ENCODE measurements at regions of chr11 and their contacts with region 1.

Region 1: GRCh38 chr11:70270104-70270876 is at the start of gene PPFIA1:
- H3K4me3 Mint-ChIP-seq: peak within 1 kb of the TSS; percentile 91
- H3K27ac Mint-ChIP-seq: peak within 1 kb of the TSS; percentile 82
- H3K4me1 Mint-ChIP-seq: peaks cover 36% of the 10 kb centered on the region
- H3K27me3 Mint-ChIP-seq: peaks cover 36% of the 10 kb centered on the region

Region 2: DNA sequence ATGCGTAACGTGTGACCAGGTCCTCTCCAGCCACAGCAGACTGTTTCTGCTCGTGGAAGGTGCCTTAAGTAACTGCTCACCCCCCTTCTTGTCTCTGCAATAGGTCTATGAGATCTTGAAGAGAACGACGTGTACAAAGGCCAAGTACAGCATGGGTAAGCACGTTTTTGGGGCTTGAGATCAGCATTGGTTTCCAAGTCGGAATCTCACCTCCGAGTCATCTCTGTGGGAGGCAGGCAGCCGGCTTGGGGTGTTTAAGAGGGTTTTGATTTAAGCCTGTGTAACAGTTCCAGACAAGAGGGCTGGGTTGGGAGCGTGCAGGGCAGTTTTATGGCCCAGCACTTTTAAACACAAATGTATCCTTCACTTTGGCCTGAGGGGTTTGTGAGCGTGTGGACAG is 162.0 kb before region 1 on chr11:
- intact Hi-C with region 1: no loop called
- H3K4me3 Mint-ChIP-seq: no peak overlapping the region
- H3K27ac Mint-ChIP-seq: no peak overlapping the region
- H3K4me1 Mint-ChIP-seq: no peaks in the 10 kb centered on the region
- H3K27me3 Mint-ChIP-seq: peaks cover 14% of the 10 kb centered on the region

Region 3: DNA sequence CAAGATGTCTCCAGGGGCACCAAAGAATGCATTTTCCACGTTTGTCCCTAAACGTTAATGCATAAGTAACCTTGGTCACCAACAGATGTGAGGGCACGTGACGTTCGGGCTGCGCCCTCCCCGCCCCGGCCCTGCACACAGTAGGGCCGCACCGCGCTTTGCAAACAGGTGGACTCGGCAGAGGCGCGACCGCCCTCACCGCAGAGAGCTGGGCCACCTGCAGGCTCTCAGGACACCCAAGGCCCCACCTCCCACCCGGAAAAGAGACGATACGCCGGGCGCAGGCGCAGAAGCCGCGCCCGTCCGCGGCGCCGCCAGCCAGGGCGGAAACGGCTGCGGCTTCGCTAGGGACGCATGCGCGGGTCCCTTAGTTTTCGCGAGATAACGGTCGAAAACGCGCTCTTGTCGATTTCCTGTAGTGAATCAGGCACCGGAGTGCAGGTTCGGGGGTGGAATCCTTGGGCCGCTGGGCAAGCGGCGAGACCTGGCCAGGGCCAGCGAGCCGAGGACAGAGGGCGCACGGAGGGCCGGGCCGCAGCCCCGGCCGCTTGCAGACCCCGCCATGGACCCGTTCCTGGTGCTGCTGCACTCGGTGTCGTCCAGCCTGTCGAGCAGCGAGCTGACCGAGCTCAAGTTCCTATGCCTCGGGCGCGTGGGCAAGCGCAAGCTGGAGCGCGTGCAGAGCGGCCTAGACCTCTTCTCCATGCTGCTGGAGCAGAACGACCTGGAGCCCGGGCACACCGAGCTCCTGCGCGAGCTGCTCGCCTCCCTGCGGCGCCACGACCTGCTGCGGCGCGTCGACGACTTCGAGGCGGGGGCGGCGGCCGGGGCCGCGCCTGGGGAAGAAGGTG is 67.2 kb before region 1 on chr11 and contains the start of gene FADD:
- intact Hi-C with region 1: loop called (anchors 5 kb)
- H3K4me3 Mint-ChIP-seq: peak within 1 kb of the TSS; percentile 95
- H3K27ac Mint-ChIP-seq: peak within 1 kb of the TSS; percentile 88
- H3K4me1 Mint-ChIP-seq: peaks cover 45% of the 10 kb centered on the region
- H3K27me3 Mint-ChIP-seq: peaks cover 14% of the 10 kb centered on the region

Region 4: GRCh38 chr11:70326365-70326811 is 56.1 kb after region 1 on chr11:
- intact Hi-C with region 1: loop called (anchors 5 kb)
- H3K4me3 Mint-ChIP-seq: no peak overlapping the region
- H3K27ac Mint-ChIP-seq: peak overlapping the region; percentile 83
- H3K4me1 Mint-ChIP-seq: peaks cover 55% of the 10 kb centered on the region
- H3K27me3 Mint-ChIP-seq: no peaks in the 10 kb centered on the region

Region 5: DNA sequence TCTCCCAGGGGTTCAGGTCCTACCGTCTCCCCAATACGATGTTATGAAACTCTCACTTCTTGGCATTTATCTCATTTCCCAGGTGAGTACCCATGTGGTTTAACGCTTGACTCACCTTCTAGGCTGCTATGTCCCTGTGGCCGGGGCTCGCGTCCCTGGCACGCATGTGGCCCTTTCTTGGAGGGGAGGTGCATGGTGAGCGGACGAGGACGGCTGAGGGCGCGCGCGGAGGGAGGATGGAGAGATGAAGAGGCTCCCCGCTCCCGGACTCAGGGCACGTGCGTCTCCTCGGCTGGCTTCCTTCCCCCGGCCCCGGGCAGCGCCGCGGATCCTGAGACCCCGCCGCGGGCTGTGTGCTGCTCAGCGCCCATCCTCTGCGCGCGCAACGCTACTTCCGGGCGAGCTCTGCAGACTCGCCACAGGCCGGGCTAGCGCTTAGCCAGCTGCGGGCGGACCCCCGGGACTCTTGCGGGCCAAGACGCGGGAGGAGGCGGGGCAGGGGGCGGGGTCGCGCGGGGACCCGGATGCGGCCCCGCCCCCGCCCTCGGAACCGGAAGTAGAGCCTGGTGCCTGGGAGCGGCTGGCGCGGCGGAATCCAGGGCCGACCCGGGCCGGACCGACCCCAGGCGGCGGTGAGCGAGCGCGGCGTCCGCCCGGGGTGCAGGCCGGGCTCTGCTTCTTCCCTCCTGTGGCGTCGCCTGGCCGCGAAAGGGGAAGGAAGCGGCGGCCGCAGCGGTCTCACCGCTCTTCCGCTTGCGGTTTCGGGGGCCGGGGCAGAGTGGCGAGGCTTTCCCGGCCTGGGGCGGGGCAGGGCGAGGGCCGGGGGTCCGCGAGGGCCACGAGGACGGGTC is 127.9 kb after region 1 on chr11 and contains the start of gene CTTN:
- intact Hi-C with region 1: loop called (anchors 5 kb)
- H3K4me3 Mint-ChIP-seq: peak within 1 kb of the TSS; percentile 61
- H3K27ac Mint-ChIP-seq: peak within 1 kb of the TSS; percentile 37
- H3K4me1 Mint-ChIP-seq: peaks cover 29% of the 10 kb centered on the region
- H3K27me3 Mint-ChIP-seq: peaks cover 92% of the 10 kb centered on the region